Activated naive CD4-positive, alpha-beta T cell treated with anti-CD3 and anti-CD28 coated beads for 36 hours (primary cell): ENCODE measurements at regions of chr2 and their contacts with region 1.

Region 1: GRCh38 chr2:175251425-175252041 is 70.0 kb upstream of the ATP5MC3 start:
- DNase-seq: peak; percentile 12
- H3K4me3 Mint-ChIP-seq: no peak overlapping the region
- H3K27ac Mint-ChIP-seq: no peak overlapping the region
- H3K4me1 Mint-ChIP-seq: no peaks in the 10 kb centered on the region
- H3K27me3 Mint-ChIP-seq: peaks cover 20% of the 10 kb centered on the region

Region 2: GRCh38 chr2:175203621-175204496 is 47.7 kb before region 1 on chr2:
- CTCF ChIA-PET with region 1: interaction called, 23 read pairs
- intact Hi-C with region 1: no loop called
- DNase-seq: peak; percentile 67
- H3K4me3 Mint-ChIP-seq: no peak overlapping the region
- H3K27ac Mint-ChIP-seq: no peak overlapping the region
- H3K4me1 Mint-ChIP-seq: peaks cover 2% of the 10 kb centered on the region
- H3K27me3 Mint-ChIP-seq: peaks cover 7% of the 10 kb centered on the region

Region 3: GRCh38 chr2:175304541-175304940 is 53.0 kb after region 1 on chr2:
- CTCF ChIA-PET with region 1: interaction called, 11 read pairs
- intact Hi-C with region 1: no loop called
- DNase-seq: no peak
- H3K4me3 Mint-ChIP-seq: no peak overlapping the region
- H3K27ac Mint-ChIP-seq: no peak overlapping the region
- H3K4me1 Mint-ChIP-seq: no peaks in the 10 kb centered on the region
- H3K27me3 Mint-ChIP-seq: peaks cover 14% of the 10 kb centered on the region